ENCODE measurements at regions of chr3 and their contacts with region 1.

Region 1: DNA sequence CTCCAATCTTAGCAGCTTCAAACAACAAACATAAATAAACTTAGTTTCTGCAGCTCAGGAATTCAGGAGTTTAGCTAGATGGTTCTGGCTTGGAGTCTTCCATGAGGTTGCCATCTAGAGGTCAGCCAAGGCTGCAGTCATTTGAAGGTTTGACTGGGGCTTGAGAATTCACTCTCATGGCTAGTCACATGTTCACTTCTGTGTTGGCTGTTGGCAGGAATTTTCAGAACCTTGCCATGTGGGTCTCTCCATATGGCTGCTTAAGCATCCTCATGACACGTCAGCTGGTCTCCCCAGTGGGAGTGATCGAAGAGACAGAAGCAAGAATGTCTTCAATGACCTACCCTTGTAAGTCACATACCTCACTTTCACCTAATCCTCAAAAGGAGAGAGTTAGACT is 269.2 kb upstream of the CNTN3 start:
- DNase-seq: peak; percentile 2
- ATAC-seq: peak; percentile 49; the same call in 2 of the 3 replicates
- H3K4me3 ChIP-seq: no peak overlapping the region
- H3K27ac ChIP-seq: no peak overlapping the region
- H3K4me1 ChIP-seq: no peaks in the 10 kb centered on the region
- H3K27me3 ChIP-seq: no peaks in the 10 kb centered on the region
- CTCF ChIP-seq: 0 out of 2 replicates have a peak, but pooled peaks have one; percentile 25
- EP300 ChIP-seq: no peak
- POLR2A ChIP-seq: no peak
- RAD21 ChIP-seq: no peak

Region 2: GRCh38 chr3:74801924-74802323 is 81.8 kb before region 1 on chr3:
- CTCF ChIA-PET with region 1: no interaction called
- POLR2A ChIA-PET with region 1: no interaction called
- in situ Hi-C with region 1: no loop called
- intact Hi-C with region 1: no loop called
- DNase-seq: no peak
- ATAC-seq: no peak
- H3K4me3 ChIP-seq: no peak overlapping the region
- H3K27ac ChIP-seq: no peak overlapping the region
- H3K4me1 ChIP-seq: no peaks in the 10 kb centered on the region
- H3K27me3 ChIP-seq: no peaks in the 10 kb centered on the region
- CTCF ChIP-seq: no peak
- EP300 ChIP-seq: no peak
- POLR2A ChIP-seq: no peak
- RAD21 ChIP-seq: no peak

Region 3: GRCh38 chr3:74906181-74906580 is 22.5 kb after region 1 on chr3:
- CTCF ChIA-PET with region 1: no interaction called
- POLR2A ChIA-PET with region 1: no interaction called
- in situ Hi-C with region 1: no loop called
- intact Hi-C with region 1: loop called (anchors 1 kb)
- DNase-seq: no peak
- ATAC-seq: no peak
- H3K4me3 ChIP-seq: no peak overlapping the region
- H3K27ac ChIP-seq: no peak overlapping the region
- H3K4me1 ChIP-seq: no peaks in the 10 kb centered on the region
- H3K27me3 ChIP-seq: no peaks in the 10 kb centered on the region
- CTCF ChIP-seq: no peak
- EP300 ChIP-seq: no peak
- POLR2A ChIP-seq: no peak
- RAD21 ChIP-seq: no peak

Measured in HepG2 (cell line).